Breast epithelium (tissue), 4 donors: ENCODE measurements at regions of chr1 and their contacts with region 1.

Region 1: GRCh38 chr1:99139876-99140275 is 124.4 kb upstream of the PLPPR4 start:
- DNase-seq: no peak
- H3K4me3 ChIP-seq: no peak overlapping the region
- H3K27ac ChIP-seq: no peak overlapping the region
- H3K4me1 ChIP-seq: no peaks in the 10 kb centered on the region
- H3K27me3 ChIP-seq: no peaks in the 10 kb centered on the region
- CTCF ChIP-seq: no peak
- POLR2A ChIP-seq: no peak

Region 2: DNA sequence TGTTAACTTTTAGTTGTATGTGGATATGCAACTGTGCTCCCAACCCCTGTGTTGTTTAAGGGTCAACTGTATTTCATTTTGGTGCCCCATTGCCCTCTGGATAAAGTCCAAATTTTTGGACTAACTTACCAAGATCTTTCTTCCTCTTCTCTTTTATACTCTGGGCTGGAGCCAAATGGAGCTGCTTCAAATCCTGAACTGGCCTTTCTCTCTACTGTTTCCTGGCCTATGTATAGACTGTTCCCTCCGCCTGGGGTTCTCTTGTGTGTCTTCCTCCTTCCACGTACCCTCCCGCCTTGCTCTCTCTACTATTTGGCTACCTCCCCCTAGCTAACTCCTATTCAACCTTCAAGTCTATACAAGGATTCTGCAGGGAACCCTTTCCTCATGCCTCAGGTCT is 1204.0 kb after region 1 on chr1:
- intact Hi-C with region 1: loop called (anchors 5 kb)
- DNase-seq: no peak
- H3K4me3 ChIP-seq: no peak overlapping the region
- H3K27ac ChIP-seq: no peak overlapping the region
- H3K4me1 ChIP-seq: no peaks in the 10 kb centered on the region
- H3K27me3 ChIP-seq: no peaks in the 10 kb centered on the region
- CTCF ChIP-seq: no peak
- POLR2A ChIP-seq: no peak